Activated CD4-positive, alpha-beta memory T cell treated with anti-CD3 and anti-CD28 coated beads, Interleukin-2, amount 10 ng/mL, durations not matched to agents 7 days and 5 days (primary cell): ENCODE measurements at regions of chr3 and their contacts with region 1.

Region 1: DNA sequence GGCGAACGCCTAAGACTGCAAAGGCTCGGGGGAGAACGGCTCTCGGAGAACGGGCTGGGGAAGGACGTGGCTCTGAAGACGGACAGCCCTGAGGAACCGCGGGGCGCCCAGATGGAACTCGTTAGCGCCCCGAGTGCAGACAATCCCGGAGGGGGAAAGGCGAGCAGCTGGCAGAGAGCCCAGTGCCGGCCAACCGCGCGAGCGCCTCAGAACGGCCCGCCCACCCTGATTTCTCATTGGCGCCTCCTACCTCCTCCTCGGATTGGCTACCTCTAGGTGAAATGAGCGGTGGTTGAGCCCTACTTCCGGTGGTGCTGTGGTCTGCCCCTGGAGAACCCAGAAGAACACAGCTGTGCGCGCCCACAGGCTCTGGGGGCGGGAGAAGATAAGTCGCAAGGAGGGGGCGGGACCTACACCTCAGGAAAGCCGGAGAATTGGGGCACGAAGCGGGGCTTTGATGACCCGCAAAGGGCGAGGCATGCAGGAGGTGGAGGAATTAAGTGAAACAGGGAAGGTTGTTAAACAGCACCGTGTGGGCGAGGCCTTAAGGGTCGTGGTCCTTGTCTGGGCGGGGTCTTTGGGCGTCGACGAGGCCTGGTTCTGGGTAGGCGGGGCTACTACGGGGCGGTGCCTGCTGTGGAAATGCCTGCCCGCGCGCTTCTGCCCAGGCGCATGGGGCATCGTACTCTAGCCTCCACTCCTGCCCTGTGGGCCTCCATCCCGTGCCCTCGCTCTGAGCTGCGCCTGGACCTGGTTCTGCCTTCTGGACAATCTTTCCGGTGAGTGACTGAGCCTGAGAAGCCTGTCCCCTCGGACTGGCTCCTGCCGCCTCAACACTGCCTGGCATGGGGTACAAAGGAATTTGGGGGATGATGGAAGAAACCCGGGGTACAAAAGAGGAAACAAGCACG is at the start of gene OGG1:
- DNase-seq: peak; percentile 98
- H3K4me3 Mint-ChIP-seq: peak within 1 kb of the TSS; percentile 93
- H3K27ac Mint-ChIP-seq: peak within 1 kb of the TSS; percentile 91
- H3K4me1 Mint-ChIP-seq: peaks cover 58% of the 10 kb centered on the region
- H3K27me3 Mint-ChIP-seq: no peaks in the 10 kb centered on the region
- total RNA-seq, gene OGG1: 29.5 to 34.3 TPM

Region 2: DNA sequence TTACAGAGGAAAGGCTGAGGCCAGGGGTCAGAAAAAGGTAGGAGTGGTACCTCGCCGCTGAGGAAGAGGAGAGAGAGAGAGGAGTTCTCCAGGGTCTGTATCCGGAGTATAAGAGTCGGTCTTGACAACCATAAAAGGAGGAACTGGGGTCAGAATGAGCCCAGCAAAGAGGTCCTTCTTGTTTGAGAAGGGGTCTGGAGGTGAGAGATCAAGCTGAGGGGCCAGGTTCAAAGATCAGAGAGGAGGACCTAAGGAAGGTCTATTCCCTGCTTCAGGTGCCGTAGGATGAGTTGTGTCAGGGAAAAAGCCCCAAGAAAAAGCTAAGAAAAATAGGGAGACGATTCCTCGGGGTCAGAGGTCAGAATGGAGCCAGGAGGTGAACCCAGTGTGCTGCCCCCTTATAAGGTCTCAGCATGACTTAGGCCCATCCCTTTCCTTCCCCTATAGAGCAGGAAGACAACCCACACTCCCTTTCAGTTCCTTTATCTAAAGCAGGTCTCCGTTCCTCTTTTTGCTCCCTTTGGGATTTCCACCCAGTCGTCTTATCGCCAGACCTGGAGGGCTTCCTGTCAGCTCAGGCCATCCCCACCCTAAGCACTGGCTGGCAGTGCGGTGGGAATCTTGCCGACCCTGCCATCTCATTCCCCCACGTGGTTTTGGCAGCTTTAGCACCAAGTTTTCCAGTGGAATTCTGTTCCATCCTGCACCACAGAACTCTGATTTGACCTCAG is 99.9 kb before region 1 on chr3:
- CTCF ChIA-PET with region 1: no interaction called
- POLR2A ChIA-PET with region 1: interaction called, 13 read pairs
- DNase-seq: peak; percentile 21
- H3K4me3 Mint-ChIP-seq: peak overlapping the region; percentile 87
- H3K27ac Mint-ChIP-seq: peak overlapping the region; percentile 87
- H3K4me1 Mint-ChIP-seq: peaks cover 18% of the 10 kb centered on the region
- H3K27me3 Mint-ChIP-seq: no peaks in the 10 kb centered on the region

Region 3: GRCh38 chr3:9761919-9762318 is 12.0 kb after region 1 on chr3:
- CTCF ChIA-PET with region 1: interaction called, 4 read pairs
- POLR2A ChIA-PET with region 1: interaction called, 13 read pairs
- DNase-seq: no peak
- H3K4me3 Mint-ChIP-seq: no peak overlapping the region
- H3K27ac Mint-ChIP-seq: no peak overlapping the region
- H3K4me1 Mint-ChIP-seq: peaks cover 5% of the 10 kb centered on the region
- H3K27me3 Mint-ChIP-seq: no peaks in the 10 kb centered on the region

Region 4: DNA sequence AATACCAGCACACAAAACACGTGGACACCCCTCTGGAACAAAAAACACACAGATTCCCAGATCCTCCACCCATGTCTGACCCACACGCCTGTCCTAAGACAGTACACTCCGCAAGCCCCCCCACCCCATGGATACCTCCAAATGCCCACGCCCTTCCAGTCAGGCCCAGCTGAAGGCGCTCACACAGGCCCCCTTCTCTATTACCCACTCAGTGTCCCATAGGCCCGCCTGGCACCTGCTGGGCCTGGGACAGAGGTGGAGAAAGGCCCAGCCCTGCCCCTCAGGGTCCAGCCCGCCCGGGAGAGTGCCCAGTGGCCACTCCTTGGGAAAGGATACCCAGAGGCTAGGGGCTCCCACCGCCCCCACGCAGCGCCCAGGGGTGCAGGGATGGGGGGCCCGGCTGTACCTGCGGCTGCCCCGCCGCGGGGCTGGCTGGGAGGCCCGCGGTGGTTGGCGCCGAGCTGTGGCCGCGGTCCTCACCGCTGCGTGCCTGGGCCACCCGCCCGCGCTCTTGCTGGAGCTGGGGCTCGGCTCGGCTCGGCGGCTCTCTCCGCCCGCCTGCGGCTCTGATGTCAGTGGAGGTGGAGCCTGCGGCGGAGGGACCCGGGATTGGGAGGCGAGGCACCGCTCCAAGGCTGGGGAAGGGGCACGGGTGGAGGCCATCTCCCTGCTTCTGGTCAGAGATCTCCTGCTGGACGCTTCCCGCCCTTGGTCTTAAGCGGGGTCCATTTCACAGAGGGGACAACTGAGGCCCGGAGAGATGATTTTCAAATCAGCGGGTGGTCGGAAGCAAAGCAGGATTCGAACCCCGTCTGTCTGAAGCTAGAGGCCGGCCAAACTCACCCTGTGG is 19.8 kb after region 1 on chr3 and contains the start of gene CAMK1:
- CTCF ChIA-PET with region 1: interaction called, 3 read pairs
- POLR2A ChIA-PET with region 1: interaction called, 17 read pairs
- DNase-seq: peak; percentile 77
- H3K4me3 Mint-ChIP-seq: peak within 1 kb of the TSS; percentile 71
- H3K27ac Mint-ChIP-seq: peak within 1 kb of the TSS; percentile 54
- H3K4me1 Mint-ChIP-seq: peaks cover 40% of the 10 kb centered on the region
- H3K27me3 Mint-ChIP-seq: no peaks in the 10 kb centered on the region
- total RNA-seq, gene CAMK1: 18.5 to 20.2 TPM

Region 5: DNA sequence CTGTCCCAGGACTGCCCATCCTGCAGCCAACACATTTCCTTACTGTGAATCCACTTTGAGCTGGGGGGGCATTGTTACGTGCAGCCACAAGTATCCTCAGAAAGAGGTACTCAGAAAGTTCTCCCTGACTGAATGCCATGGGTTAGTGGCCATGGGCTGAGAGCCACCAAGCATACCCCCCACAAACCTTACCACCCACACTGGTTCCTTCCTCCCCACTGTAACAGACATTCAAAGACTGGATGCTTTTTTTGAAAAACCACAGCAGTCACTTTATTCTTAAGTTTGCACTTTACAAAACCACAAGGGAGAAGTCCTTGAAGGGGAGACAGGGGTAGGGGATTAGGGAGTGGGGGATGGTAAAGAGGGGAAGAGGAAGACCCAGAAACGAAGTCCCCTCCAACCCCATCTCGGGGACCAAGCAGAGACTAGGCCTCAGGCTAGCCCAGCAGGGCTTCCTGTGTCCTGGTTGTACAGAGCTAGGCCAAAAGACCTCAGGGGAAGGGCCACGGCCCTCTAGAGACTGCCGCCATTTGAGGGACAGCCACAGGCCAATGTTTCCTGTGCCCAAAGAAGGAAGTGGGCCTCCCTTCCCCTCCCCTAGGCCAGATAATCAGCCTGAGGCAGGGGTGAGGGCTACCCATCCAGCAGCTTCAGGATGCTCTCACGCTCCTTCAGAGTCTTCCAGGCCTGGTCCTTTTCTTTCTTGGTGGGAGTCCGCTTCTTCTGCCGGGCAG is 30.0 kb after region 1 on chr3:
- CTCF ChIA-PET with region 1: no interaction called
- POLR2A ChIA-PET with region 1: interaction called, 12 read pairs
- DNase-seq: peak; percentile 61
- H3K4me3 Mint-ChIP-seq: peak overlapping the region; percentile 21
- H3K27ac Mint-ChIP-seq: peak overlapping the region; percentile 92
- H3K4me1 Mint-ChIP-seq: peaks cover 54% of the 10 kb centered on the region
- H3K27me3 Mint-ChIP-seq: no peaks in the 10 kb centered on the region

Region 6: DNA sequence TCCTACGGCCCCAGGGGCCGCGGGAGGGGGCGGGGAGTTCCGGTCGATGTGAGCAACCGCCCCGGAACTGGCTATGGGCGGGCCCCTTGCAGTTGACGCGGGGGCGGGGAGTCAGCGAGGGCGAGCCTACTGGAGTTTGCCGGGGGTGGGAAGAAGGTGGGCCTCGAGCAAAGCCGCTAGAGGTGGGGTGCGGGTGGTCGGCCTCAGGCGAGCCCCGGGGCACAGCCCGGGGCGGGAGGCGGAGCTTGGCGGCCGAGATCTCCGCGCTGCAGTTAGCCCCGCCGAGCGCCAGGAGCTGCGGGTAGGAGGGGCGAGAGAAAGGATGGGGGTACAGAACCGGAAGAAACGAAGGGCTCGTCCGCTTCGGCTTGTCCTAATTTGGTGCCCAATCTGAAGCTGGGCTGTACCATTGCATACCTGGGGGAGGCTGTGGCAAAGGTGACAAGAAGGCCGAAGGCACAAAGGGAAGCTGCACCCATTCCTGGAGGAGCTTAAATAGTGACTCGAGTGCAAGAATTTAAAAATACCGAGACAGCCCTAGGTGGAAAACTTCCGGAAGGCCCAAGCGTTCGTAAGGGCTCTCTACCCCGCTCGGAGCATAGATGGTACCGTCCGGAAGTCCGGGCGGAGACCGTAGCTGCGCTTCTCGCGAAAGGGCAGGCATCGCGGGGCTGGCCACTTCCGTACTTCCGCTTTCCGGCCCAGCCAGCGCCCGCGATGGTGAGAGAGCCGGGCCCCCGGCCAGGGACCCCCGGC is 42.7 kb after region 1 on chr3 and contains the starts of genes ARPC4 and TADA3:
- CTCF ChIA-PET with region 1: interaction called, 6 read pairs
- POLR2A ChIA-PET with region 1: interaction called, 59 read pairs
- DNase-seq: peak; percentile 93
- H3K4me3 Mint-ChIP-seq: peak within 1 kb of the TSS; percentile 97
- H3K27ac Mint-ChIP-seq: peak within 1 kb of the TSS; percentile 99
- H3K4me1 Mint-ChIP-seq: peaks cover 63% of the 10 kb centered on the region
- H3K27me3 Mint-ChIP-seq: no peaks in the 10 kb centered on the region
- total RNA-seq, gene ARPC4: 255 to 266 TPM
- total RNA-seq, gene TADA3: 88.1 to 88.3 TPM

Region 7: DNA sequence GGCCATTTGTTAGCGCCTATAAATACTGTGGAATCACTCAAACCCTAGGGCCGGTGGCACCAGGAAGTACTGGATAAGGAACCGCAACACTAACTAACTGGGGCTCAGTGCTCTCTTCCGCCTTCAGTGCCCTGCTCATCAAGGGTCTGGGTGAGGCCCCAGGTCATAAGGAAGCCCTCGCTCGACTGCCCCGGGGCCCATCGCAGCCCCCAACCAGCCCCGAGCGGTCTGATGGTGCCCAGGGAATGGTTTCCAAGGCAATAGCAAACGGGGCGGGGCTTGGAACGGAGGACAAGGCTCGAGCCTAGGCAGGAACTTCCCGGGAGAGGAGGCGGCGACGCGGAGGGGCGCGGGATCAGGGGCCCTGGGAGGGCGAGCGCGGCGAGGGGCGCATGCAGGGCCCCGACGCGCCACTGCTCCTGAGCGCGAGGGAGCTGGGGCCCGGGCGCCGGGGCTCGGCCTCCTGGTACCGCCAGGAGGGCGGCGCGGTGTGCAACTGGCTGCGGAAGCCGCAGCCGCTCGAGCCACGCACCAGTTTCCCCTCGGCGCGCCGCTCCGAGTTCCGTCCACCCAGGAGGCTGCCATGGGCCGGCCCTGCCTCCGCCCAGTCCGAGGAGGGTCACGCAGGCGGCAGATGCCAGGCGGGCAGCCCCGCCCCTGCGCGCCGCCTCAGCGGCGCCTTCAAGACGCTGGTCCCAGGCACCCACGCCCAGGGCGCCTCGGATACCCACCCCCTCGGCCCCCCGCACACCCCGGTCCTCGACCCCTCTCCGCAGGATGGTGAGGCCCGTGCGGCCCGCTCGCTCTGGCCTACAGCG is 59.9 kb after region 1 on chr3 and contains the start of gene TTLL3:
- CTCF ChIA-PET with region 1: no interaction called
- POLR2A ChIA-PET with region 1: interaction called, 12 read pairs
- DNase-seq: peak; percentile 54
- H3K4me3 Mint-ChIP-seq: peak within 1 kb of the TSS; percentile 86
- H3K27ac Mint-ChIP-seq: peak within 1 kb of the TSS; percentile 93
- H3K4me1 Mint-ChIP-seq: peaks cover 51% of the 10 kb centered on the region
- H3K27me3 Mint-ChIP-seq: no peaks in the 10 kb centered on the region
- total RNA-seq, gene TTLL3: 50.8 to 59.0 TPM

Region 8: DNA sequence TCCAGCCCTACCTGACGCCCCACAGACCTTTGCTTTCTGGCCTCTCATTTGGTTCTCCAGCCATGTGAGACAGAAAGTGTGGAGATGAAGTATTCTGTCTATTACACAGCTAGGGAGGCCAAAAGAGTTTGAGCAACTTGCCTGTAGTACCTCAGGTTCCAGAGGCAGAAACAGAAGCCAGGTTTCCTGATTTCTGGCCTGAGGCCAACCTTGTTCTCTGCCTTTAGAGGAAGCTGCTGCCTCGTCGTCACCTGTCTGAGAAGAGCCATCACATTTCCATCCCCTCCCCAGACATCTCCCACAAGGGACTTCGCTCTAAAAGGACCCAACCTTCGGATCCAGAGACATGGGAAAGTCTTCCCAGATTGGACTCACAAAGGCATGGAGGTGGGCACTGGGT is 156.6 kb after region 1 on chr3:
- CTCF ChIA-PET with region 1: no interaction called
- POLR2A ChIA-PET with region 1: no interaction called
- DNase-seq: no peak
- H3K4me3 Mint-ChIP-seq: no peak overlapping the region
- H3K27ac Mint-ChIP-seq: no peak overlapping the region
- H3K4me1 Mint-ChIP-seq: peaks cover 33% of the 10 kb centered on the region
- H3K27me3 Mint-ChIP-seq: peaks cover 2% of the 10 kb centered on the region